RWPE1 (cell line): ENCODE measurements at regions of chr12 and their contacts with region 1.

Region 1: GRCh38 chr12:56657416-56658379 is 11.9 kb upstream of the ATP5F1B start:
- DNase-seq: no peak
- H3K27ac ChIP-seq: no peak overlapping the region; the same call in 1 of the 2 replicates
- CTCF ChIP-seq: no peak

Region 2: GRCh38 chr12:56676851-56677580 is 19.3 kb after region 1 on chr12:
- CTCF ChIA-PET with region 1: interaction called, 12 read pairs
- POLR2A ChIA-PET with region 1: no interaction called
- DNase-seq: no peak
- H3K27ac ChIP-seq: peak overlapping the region; percentile 26
- CTCF ChIP-seq: no peak

Region 3: DNA sequence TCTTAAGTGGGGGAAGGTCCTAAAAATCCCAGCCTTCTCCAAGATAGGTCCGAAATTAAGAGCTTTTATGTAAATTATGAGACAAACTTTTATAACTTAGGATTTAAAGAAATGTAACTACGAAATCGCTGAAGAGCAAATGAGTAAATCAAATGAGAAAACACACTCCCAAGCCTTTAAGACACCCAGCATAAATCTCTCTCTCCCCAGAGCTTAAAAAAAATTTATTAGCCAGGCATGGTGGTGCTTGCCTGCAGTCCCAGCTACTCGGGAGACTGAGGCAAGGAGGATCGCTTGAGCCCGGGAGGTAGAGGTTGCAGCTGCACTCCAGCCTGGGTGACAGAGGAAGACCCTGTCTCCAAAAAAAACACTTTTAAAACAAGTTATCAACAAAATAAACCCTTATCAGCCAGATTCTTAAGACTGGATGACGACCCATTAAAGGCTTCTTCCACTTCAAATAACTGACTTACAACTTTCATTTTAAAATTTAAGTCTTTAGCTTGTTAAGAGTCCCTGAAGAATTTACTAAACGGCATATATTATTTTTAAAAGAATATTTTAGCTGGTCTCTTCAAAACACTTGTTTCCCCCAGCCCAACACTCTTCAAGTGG is 27.2 kb after region 1 on chr12:
- CTCF ChIA-PET with region 1: interaction called, 10 read pairs
- POLR2A ChIA-PET with region 1: no interaction called
- DNase-seq: no peak
- H3K27ac ChIP-seq: peak overlapping the region; percentile 82
- CTCF ChIP-seq: no peak